ENCODE measurements at regions of chr7 and their contacts with region 1.

Region 1: DNA sequence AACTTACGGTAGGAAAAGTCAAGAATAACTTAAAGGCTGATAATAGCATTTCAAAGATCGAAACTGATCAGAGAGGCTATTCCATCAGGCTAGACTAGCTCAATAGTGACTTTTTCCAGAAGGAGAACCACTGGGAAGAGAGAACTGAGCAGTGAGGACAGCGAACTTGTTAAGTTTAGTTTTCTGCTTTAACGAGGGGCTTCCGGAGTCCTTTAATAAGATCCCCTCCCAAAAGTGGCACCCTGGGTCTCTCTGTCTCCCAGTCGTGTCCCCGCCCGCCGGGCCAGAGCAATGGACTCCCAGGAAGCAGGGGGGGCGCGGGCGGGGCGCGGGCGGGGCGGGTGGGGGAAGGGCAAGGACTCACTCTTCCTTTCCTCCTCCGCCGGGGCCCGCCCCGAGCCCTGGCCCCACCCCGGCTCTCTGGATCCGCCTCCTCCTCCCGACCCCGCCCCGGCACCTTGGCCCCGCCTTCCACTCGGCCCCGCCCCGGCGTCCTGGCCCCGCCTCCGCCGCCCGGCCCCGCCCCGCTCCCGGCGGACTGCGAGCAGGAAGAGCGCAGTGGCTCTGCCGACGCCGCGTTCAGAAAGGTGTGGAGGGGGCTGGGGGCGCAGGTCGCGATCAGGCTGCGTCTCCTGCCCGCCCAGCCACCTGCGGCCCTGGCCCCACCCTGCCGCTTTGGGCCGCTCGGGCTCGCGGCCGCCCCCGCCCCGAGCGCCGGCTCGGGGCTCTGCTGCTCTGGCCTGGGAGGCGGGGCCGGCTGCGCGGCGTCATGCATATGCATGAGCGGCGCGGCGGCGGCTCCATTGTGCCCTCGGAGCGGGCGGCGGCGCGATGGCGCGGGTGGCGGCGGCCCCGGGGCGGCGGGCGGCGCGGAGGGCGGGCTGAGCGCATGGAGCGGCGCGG is at the start of gene ZMIZ2:
- DNase-seq: peak; percentile 84
- H3K4me3 Mint-ChIP-seq: peak within 1 kb of the TSS; percentile 74
- H3K27ac Mint-ChIP-seq: peak within 1 kb of the TSS; percentile 29
- H3K4me1 Mint-ChIP-seq: peaks cover 26% of the 10 kb centered on the region
- H3K27me3 Mint-ChIP-seq: no peaks in the 10 kb centered on the region
- CTCF ChIP-seq: no peak
- total RNA-seq, gene ZMIZ2: 94.4 and 100 TPM in 2 replicates

Region 2: GRCh38 chr7:44587843-44588711 is 160.2 kb before region 1 on chr7:
- CTCF ChIA-PET with region 1: no interaction called
- POLR2A ChIA-PET with region 1: interaction called, 4 read pairs
- intact Hi-C with region 1: loop called (anchors 5 kb)
- DNase-seq: peak; percentile 76
- H3K4me3 Mint-ChIP-seq: no peak overlapping the region
- H3K27ac Mint-ChIP-seq: no peak overlapping the region
- H3K4me1 Mint-ChIP-seq: peaks cover 7% of the 10 kb centered on the region
- H3K27me3 Mint-ChIP-seq: peaks cover 6% of the 10 kb centered on the region
- CTCF ChIP-seq: peak; percentile 72

Region 3: DNA sequence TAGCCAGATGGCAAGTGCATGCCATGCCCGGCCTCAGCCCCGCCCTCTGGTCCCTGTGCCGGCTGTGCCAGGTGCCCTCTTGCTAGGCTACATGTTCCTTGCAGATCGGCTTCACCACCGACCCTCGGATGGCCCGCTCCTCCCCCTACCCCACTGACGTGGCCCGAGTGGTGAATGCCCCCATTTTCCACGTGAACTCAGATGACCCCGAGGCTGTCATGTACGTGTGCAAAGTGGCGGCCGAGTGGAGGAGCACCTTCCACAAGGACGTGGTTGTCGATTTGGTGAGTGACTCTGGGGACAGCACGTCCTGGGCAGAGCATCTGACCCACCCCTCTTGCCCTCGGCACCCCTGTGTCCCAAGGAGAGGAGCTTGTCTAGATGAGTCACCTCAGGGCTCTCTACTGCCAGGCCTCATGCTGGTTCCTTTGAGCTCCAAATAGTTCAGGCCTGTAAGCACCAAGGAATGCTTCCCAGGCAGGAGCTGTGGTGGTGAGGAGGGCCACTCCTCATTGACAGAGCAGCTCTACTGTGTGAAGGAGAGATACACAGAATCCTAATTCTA is 54.5 kb before region 1 on chr7:
- CTCF ChIA-PET with region 1: interaction called, 3 read pairs
- POLR2A ChIA-PET with region 1: interaction called, 3 read pairs
- intact Hi-C with region 1: loop called (anchors 10 kb)
- DNase-seq: peak; percentile 63
- H3K4me3 Mint-ChIP-seq: no peak overlapping the region
- H3K27ac Mint-ChIP-seq: peak overlapping the region; percentile 92
- H3K4me1 Mint-ChIP-seq: peaks cover 8% of the 10 kb centered on the region
- H3K27me3 Mint-ChIP-seq: no peaks in the 10 kb centered on the region
- CTCF ChIP-seq: no peak

Region 4: DNA sequence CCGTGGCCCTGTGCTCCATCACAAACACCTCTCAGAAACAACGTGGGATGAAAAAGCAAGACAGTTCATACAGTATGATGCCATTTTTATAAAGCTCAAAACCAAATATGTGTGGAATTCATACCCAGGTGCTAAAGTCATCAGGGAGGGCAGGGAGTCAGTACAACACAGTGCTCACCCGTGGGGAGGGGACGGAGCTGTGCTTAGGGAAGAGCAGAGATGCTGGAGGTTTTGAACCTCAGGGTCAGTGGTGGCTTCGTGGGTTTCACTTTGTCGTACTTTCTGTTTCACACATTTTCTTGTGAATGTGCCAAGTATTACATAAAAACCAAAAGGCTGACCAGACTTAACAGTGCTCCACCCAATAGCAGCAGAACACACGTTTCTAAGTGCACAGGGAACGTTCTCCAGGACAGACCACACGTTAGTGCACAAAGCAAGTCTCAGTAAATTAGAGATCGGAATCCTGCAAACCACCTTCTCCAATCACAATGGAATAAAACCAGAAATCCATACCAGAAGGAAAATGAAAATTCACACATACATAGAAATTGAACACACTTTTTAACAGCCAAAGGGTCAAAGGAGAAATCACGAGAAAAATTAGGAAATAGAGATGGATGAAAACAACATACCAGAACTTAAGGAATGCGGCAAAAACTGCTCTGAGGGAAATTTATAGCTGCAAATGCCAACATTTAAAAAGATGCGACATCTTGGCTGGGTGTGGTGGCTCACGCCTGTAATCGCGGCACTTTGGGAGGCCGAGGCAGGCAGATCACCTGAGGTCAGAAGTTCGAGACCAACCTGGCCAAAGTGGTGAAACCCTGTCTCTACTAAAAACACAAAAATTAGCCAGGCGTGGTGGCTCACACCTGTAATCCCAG is 21.7 kb after region 1 on chr7:
- CTCF ChIA-PET with region 1: no interaction called
- POLR2A ChIA-PET with region 1: interaction called, 15 read pairs
- intact Hi-C with region 1: no loop called
- DNase-seq: peak; percentile 39
- H3K4me3 Mint-ChIP-seq: peak overlapping the region; percentile 38
- H3K27ac Mint-ChIP-seq: peak overlapping the region; percentile 20
- H3K4me1 Mint-ChIP-seq: peaks cover 27% of the 10 kb centered on the region
- H3K27me3 Mint-ChIP-seq: no peaks in the 10 kb centered on the region
- CTCF ChIP-seq: no peak

Region 5: GRCh38 chr7:44891372-44891771 is 143.1 kb after region 1 on chr7:
- CTCF ChIA-PET with region 1: no interaction called
- POLR2A ChIA-PET with region 1: no interaction called
- intact Hi-C with region 1: no loop called
- DNase-seq: no peak
- H3K4me3 Mint-ChIP-seq: no peak overlapping the region
- H3K27ac Mint-ChIP-seq: no peak overlapping the region
- H3K4me1 Mint-ChIP-seq: no peaks in the 10 kb centered on the region
- H3K27me3 Mint-ChIP-seq: no peaks in the 10 kb centered on the region
- CTCF ChIP-seq: no peak

Region 6: DNA sequence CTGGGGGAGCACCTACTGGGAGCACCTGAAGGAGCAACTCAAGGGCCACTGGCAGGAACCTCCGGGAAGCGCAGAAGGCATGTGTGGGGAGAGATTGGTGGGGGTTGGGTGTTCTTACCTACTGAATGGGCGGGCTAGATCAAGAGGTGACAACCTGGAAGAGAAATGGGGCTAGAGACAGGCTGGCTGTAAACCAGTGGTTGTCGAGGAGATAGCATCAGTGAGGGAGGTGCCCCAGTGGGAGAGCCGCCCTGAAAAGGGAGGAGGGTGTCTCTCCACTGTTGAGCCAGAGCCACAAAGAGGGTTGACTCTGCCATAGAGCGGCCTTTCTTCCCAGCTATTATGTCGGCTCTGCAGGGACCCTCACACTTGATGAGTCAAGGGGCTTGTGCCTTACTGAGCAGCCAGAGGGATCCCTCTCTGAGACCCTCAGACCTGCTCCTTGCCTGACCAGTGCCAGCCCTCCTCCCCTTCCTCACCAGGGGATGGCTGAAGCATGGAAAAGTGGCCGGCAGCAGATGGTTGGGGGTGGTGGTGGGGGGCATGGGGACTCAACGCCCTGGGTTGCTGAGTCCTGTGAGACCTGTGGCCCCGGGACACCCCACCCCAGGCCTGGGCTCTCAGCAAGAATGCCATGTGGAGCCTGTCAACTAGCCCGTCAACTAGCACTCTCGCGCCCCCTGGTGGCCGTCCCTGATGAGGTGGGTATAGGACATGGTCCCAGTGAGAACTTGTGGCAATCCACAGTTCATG is 173.5 kb after region 1 on chr7:
- CTCF ChIA-PET with region 1: no interaction called
- POLR2A ChIA-PET with region 1: no interaction called
- intact Hi-C with region 1: no loop called
- DNase-seq: peak; percentile 81
- H3K4me3 Mint-ChIP-seq: no peak overlapping the region
- H3K27ac Mint-ChIP-seq: no peak overlapping the region
- H3K4me1 Mint-ChIP-seq: no peaks in the 10 kb centered on the region
- H3K27me3 Mint-ChIP-seq: no peaks in the 10 kb centered on the region
- CTCF ChIP-seq: peak; percentile 82

Measured in MCF 10A (cell line).